Activated CD8-positive, alpha-beta memory T cell treated with anti-CD3 and anti-CD28 coated beads, Interleukin-2, amount 10 ng/mL, durations not matched to agents 7 days and 5 days (primary cell): ENCODE measurements at regions of chr2 and their contacts with region 1.

Region 1: GRCh38 chr2:98634401-98635092 is 26.2 kb downstream of the UNC50 start:
- DNase-seq: peak; percentile 89
- ATAC-seq: peak; percentile 79
- H3K4me3 Mint-ChIP-seq: peak overlapping the region; percentile 58
- H3K27ac Mint-ChIP-seq: peak overlapping the region; percentile 95
- H3K4me1 Mint-ChIP-seq: peaks cover 40% of the 10 kb centered on the region
- H3K27me3 Mint-ChIP-seq: no peaks in the 10 kb centered on the region

Region 2: DNA sequence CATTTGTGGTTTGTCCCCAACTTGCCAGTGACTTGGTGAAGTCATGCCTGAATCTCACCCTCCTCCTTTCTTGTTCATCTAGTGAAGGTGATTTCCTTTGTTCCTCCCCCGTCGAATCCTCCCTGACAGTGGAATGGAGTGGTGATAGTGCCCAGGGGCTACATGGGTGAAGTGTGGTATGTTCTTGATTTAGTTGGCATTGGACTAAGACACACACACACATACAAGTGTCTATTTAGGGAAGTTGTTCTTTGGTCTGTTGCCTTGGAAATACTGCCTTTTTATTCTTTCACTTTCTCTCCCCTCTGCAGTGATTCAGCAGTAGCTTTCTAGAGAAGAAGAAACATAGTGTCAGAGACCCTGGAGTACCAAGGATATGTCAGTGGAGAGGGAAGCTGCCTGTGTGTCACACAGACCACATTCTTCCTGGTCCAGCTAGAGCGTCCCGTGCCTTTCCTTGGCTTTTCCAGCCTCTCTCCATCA is 179.0 kb before region 1 on chr2:
- CTCF ChIA-PET with region 1: no interaction called
- DNase-seq: no peak
- ATAC-seq: peak; percentile 59
- H3K4me3 Mint-ChIP-seq: peak overlapping the region; percentile 66
- H3K27ac Mint-ChIP-seq: peak overlapping the region; percentile 89
- H3K4me1 Mint-ChIP-seq: peaks cover 95% of the 10 kb centered on the region
- H3K27me3 Mint-ChIP-seq: no peaks in the 10 kb centered on the region

Region 3: DNA sequence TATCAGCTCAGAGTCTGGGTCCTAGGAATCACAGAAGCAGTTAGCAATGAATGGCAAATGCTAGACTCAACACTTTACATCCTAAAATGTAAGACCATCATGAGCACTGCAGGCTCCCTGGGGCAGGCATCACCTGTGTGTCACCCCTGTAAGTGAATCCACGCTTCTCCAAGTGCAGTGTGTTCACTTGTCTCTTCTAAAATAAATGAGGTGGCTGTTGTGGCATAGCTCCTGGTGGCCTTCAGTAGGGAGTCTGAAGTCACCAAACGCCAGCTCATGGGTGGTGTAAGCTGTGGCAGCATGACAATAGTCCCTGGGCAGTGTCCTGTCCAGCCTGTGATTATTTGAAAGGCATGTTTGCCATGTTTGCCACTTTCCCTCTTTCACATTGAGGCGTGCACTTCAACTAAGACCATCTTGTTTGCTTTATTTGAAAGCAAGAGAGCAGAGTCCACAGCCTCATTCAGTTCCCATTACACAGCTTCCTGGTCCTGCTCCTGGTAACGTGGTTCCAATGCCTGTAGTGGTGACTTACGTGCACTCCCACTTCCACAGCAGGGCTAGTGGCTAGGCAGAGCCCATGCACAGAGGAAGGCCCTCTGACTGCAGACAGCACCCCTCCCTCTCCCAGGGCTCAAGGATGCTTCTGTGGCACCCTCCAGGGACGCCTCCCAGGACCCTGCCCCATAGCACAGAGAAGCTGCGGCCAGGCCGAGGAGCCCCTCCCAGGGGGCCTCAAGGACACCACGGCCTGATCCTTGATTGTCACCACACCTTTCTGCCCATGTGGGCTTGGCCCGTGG is 50.5 kb before region 1 on chr2:
- CTCF ChIA-PET with region 1: no interaction called
- DNase-seq: peak; percentile 30
- ATAC-seq: no peak
- H3K4me3 Mint-ChIP-seq: no peak overlapping the region
- H3K27ac Mint-ChIP-seq: no peak overlapping the region
- H3K4me1 Mint-ChIP-seq: peaks cover 4% of the 10 kb centered on the region
- H3K27me3 Mint-ChIP-seq: no peaks in the 10 kb centered on the region

Region 4: DNA sequence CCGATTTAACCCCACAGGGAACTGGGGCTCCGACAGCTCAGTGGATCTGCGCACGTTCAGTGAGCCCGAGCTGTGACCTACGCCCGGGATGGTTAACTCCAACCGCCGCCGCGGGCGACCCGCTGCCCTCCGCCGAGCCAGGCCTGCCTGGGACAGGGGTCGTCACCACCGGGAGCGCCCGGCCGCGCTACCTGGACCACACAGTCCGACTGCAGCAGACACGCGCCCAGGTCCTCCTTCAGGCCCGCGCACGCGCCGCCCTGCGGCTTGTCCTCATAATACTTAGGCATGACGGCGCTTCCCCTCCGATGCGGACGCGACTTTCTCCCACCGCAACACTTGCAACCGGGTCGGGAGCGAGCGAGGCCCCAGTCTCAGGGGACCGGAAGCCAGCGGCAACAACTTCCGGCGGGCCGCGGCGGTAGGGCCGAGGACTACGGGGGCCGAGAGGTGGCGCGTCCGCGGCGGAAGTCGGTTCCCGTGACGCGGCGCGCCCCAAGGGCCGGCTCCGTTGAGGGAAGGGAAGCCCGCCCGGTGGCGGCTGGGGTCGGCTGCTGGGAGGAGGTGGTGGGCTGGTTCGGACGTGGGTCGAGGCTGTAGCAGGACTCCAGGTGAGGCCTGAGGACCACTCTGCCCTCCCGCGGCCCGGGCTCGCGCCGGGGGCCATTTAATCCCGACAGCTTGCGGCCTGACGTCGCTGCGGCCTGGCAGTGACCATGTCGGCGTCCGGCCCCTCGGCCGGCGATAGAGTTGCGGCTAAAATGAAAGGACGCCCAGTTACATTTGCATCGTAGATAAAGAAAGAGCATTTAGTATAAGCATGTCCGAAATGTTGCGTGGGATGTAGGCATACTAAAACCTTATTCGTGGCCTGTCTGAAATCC is 26.2 kb before region 1 on chr2 and contains the starts of genes COA5 and UNC50:
- CTCF ChIA-PET with region 1: interaction called, 11 read pairs
- DNase-seq: peak; percentile 94
- ATAC-seq: peak; percentile 92
- H3K4me3 Mint-ChIP-seq: peak within 1 kb of the TSS; percentile 83
- H3K27ac Mint-ChIP-seq: peak within 1 kb of the TSS; percentile 91
- H3K4me1 Mint-ChIP-seq: peaks cover 59% of the 10 kb centered on the region
- H3K27me3 Mint-ChIP-seq: no peaks in the 10 kb centered on the region
- total RNA-seq, gene COA5: 22.2 to 26.0 TPM
- total RNA-seq, gene UNC50: 26.7 to 33.5 TPM

Region 5: GRCh38 chr2:98623657-98624056 is 10.9 kb before region 1 on chr2:
- CTCF ChIA-PET with region 1: interaction called, 15 read pairs
- DNase-seq: no peak
- ATAC-seq: peak; percentile 36
- H3K4me3 Mint-ChIP-seq: no peak overlapping the region
- H3K27ac Mint-ChIP-seq: peak overlapping the region; percentile 15
- H3K4me1 Mint-ChIP-seq: peaks cover 39% of the 10 kb centered on the region
- H3K27me3 Mint-ChIP-seq: no peaks in the 10 kb centered on the region